ENCODE measurements at regions of chr4 and their contacts with region 1.

Region 1: GRCh38 chr4:54091637-54092404 is 8.1 kb upstream of the GSX2 start:
- DNase-seq: peak; percentile 35
- ATAC-seq: peak; percentile 73
- H3K4me3 ChIP-seq: peak overlapping the region; percentile 52 to 79 (median 56)
- H3K27ac ChIP-seq: peak overlapping the region; percentile 43
- H3K4me1 ChIP-seq: peaks cover 32% of the 10 kb centered on the region
- H3K27me3 ChIP-seq: peaks cover 4 to 40% of the 10 kb centered on the region in 2 experiments; a peak in 3 of 5 replicates
- CTCF ChIP-seq: no peak
- EP300 ChIP-seq: no peak
- POLR2A ChIP-seq: peak in 1 of 2 experiments; percentile 85; a peak in 2 of 4 replicates
- RAD21 ChIP-seq: no peak

Region 2: GRCh38 chr4:52877036-52877435 is 1214.8 kb before region 1 on chr4:
- CTCF ChIA-PET with region 1: no interaction called
- POLR2A ChIA-PET with region 1: no interaction called
- in situ Hi-C with region 1: no loop called
- intact Hi-C with region 1: loop called (anchors 5 kb)
- DNase-seq: no peak
- ATAC-seq: no peak
- H3K4me3 ChIP-seq: no peak overlapping the region
- H3K27ac ChIP-seq: no peak overlapping the region
- H3K4me1 ChIP-seq: no peaks in the 10 kb centered on the region
- H3K27me3 ChIP-seq: no peaks in the 10 kb centered on the region; a peak in 1 of 5 replicates
- CTCF ChIP-seq: no peak
- EP300 ChIP-seq: no peak
- POLR2A ChIP-seq: no peak
- RAD21 ChIP-seq: no peak

Region 3: GRCh38 chr4:54118850-54119589 is 27.2 kb after region 1 on chr4:
- CTCF ChIA-PET with region 1: no interaction called
- POLR2A ChIA-PET with region 1: no interaction called
- in situ Hi-C with region 1: no loop called
- intact Hi-C with region 1: no loop called
- DNase-seq: no peak
- ATAC-seq: no peak
- H3K4me3 ChIP-seq: no peak overlapping the region
- H3K27ac ChIP-seq: no peak overlapping the region
- H3K4me1 ChIP-seq: no peaks in the 10 kb centered on the region
- H3K27me3 ChIP-seq: no peaks in the 10 kb centered on the region
- CTCF ChIP-seq: no peak
- EP300 ChIP-seq: no peak
- POLR2A ChIP-seq: no peak
- RAD21 ChIP-seq: no peak

Region 4: DNA sequence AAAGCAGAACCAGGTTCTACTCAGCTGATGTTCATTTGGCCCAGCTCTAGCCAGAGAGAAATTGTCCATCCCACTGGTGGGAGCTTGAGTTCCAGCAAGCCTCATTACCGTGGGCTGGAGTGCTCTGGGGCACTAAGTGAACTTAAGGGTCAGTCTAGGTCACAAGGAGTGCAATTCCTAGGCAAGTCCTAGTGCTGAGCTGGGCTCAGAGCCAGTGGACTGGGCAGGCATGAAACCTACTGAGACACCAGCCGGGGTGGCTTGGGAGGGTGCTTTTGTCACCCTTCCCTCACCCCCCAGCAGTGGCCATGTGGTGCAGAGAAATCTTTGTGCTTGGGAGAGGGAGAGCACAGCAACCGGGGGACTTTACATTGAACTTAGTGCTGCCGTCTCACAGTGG is 47.5 kb after region 1 on chr4:
- CTCF ChIA-PET with region 1: no interaction called
- POLR2A ChIA-PET with region 1: no interaction called
- in situ Hi-C with region 1: no loop called
- intact Hi-C with region 1: no loop called
- DNase-seq: no peak
- ATAC-seq: no peak; the same call in 1 of the 3 replicates
- H3K4me3 ChIP-seq: no peak overlapping the region
- H3K27ac ChIP-seq: no peak overlapping the region
- H3K4me1 ChIP-seq: peaks cover 3% of the 10 kb centered on the region
- H3K27me3 ChIP-seq: 0 out of 5 replicates have a peak, but pooled peaks cover 0 to 12% of the 10 kb centered on the region in 2 experiments
- CTCF ChIP-seq: no peak
- EP300 ChIP-seq: no peak
- POLR2A ChIP-seq: no peak
- RAD21 ChIP-seq: no peak